A673 (cell line): ENCODE measurements at regions of chr3 and their contacts with region 1.

Region 1: GRCh38 chr3:54433846-54434245 is 311.5 kb downstream of the CACNA2D3 start:
- DNase-seq: peak; percentile 42
- H3K4me3 ChIP-seq: no peak overlapping the region
- H3K27ac ChIP-seq: no peak overlapping the region
- H3K4me1 ChIP-seq: no peaks in the 10 kb centered on the region
- H3K27me3 ChIP-seq: no peaks in the 10 kb centered on the region
- CTCF ChIP-seq: peak; percentile 41

Region 2: DNA sequence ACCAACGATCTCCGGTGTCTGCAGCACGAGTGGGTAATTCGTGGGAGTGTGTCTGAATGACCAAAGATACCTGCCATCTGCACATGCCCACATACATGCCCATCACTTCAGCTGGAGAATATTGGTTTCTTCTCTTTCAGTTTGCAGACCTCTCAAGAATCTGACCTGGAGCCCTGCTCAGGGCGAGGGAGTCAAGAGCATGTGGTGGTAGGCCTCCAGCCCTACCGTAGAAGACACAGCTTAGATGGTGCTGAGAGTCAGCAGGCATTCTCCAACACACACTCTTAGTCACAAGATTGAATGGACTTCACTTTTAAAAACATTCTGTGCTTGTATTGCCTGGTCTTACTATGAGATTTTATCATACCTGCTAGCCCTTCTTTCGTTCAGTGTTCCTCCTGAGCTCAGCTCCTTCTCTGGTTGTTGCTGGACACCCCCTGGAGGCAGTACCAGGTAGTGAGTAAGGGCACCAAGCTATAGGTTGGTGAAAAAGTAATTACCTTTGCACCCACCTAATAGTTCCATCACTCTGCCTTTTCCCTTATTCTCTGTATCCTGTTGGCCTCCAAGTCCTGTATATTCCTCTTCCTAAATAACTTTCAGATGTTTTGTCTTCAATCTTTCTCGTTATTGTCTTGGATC is 59.5 kb before region 1 on chr3:
- CTCF ChIA-PET with region 1: no interaction called
- POLR2A ChIA-PET with region 1: no interaction called
- intact Hi-C with region 1: no loop called
- DNase-seq: no peak
- H3K4me3 ChIP-seq: no peak overlapping the region
- H3K27ac ChIP-seq: no peak overlapping the region
- H3K4me1 ChIP-seq: no peaks in the 10 kb centered on the region
- H3K27me3 ChIP-seq: no peaks in the 10 kb centered on the region
- CTCF ChIP-seq: peak; percentile 35

Region 3: GRCh38 chr3:56251343-56251945 is 1817.6 kb after region 1 on chr3:
- CTCF ChIA-PET with region 1: no interaction called
- POLR2A ChIA-PET with region 1: no interaction called
- intact Hi-C with region 1: loop called (anchors 10 kb)
- DNase-seq: peak; percentile 41
- H3K4me3 ChIP-seq: no peak overlapping the region
- H3K27ac ChIP-seq: no peak overlapping the region
- H3K4me1 ChIP-seq: no peaks in the 10 kb centered on the region
- H3K27me3 ChIP-seq: no peaks in the 10 kb centered on the region
- CTCF ChIP-seq: peak; percentile 64